ENCODE measurements at regions of chr10 and their contacts with region 1.

Region 1: GRCh38 chr10:25582961-25583360 is 351.1 kb upstream of the MYO3A start:
- DNase-seq: no peak
- H3K4me3 ChIP-seq: no peak overlapping the region
- CTCF ChIP-seq: no peak
- POLR2A ChIP-seq: no peak

Region 2: DNA sequence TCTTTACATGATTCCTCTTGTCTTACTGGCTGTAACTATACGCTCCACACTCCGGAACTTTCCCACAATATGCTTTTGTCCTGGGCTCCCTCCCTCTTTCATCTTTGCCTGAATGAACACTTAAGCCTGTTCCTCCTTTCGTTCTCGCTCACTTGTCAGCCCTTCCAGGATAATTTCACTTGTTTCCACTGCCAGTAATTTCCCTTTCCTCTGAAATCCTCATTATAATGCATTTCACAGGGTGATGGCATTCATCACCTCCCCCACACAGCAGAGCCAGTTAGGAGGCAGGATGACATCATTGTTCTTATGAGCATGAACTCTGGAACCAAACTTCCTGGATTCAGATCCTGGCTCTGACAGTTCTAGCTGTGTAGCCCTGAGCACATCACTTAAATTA is 35.6 kb before region 1 on chr10:
- intact Hi-C with region 1: loop called (anchors 1 kb)
- DNase-seq: no peak
- H3K4me3 ChIP-seq: no peak overlapping the region
- CTCF ChIP-seq: no peak
- POLR2A ChIP-seq: no peak

Region 3: DNA sequence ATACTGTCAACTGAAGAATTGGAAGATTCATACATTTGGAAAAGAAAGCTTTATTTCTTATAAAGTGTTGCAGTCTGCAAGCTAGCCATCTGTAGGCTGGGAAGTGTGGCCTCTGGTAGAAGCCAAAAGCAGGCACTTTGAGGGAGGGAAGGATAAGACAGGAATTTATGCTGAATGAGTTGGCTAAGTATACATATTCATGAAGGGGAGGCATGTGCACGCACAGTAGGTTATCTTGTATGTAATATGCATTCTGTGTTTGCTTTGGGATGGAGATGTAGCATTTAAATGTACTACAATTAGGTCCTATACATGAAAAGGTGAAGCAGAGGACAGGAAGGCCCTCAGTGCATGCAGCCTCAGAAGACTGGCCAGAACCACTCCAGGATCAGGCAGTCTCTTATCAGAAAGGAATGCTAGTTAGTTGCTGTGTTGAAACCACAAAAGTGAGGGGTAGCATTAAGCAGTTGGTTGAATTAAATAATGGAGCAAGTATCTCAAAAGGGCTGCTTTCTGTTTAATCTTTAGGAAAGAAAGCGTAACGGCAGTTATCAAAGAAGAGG is 392.0 kb after region 1 on chr10:
- intact Hi-C with region 1: no loop called
- DNase-seq: no peak
- H3K4me3 ChIP-seq: no peak overlapping the region
- CTCF ChIP-seq: no peak
- POLR2A ChIP-seq: no peak

Measured in lower leg skin (tissue), 4 donors.